Left colon (tissue), 2 donors: ENCODE measurements at regions of chr12 and their contacts with region 1.

Region 1: GRCh38 chr12:120356567-120357030 is 12.4 kb downstream of the MSI1 start:
- DNase-seq: peak; percentile 52 to 75
- ATAC-seq: peak; percentile 89

Region 2: GRCh38 chr12:120421701-120422100 is 65.1 kb after region 1 on chr12:
- intact Hi-C with region 1: loop called (anchors 10 kb)
- DNase-seq: no peak
- ATAC-seq: no peak